ENCODE measurements at regions of chr1 and their contacts with region 1.

Region 1: GRCh38 chr1:203304919-203305808 is at the start of gene BTG2:
- DNase-seq: peak; percentile 99
- H3K4me3 ChIP-seq: peak within 1 kb of the TSS; percentile 84 to 94
- H3K27ac ChIP-seq: peak within 1 kb of the TSS; percentile 45 to 83; a peak in 3 of 4 replicates
- H3K4me1 ChIP-seq: peaks cover 22 to 53% of the 10 kb centered on the region in 2 experiments
- H3K27me3 ChIP-seq: no peaks in the 10 kb centered on the region
- CTCF ChIP-seq: no peak
- EP300 ChIP-seq: no peak
- RAD21 ChIP-seq: no peak
- polyA plus RNA-seq, gene BTG2: 26.2 and 33.5 TPM in 2 replicates

Region 2: DNA sequence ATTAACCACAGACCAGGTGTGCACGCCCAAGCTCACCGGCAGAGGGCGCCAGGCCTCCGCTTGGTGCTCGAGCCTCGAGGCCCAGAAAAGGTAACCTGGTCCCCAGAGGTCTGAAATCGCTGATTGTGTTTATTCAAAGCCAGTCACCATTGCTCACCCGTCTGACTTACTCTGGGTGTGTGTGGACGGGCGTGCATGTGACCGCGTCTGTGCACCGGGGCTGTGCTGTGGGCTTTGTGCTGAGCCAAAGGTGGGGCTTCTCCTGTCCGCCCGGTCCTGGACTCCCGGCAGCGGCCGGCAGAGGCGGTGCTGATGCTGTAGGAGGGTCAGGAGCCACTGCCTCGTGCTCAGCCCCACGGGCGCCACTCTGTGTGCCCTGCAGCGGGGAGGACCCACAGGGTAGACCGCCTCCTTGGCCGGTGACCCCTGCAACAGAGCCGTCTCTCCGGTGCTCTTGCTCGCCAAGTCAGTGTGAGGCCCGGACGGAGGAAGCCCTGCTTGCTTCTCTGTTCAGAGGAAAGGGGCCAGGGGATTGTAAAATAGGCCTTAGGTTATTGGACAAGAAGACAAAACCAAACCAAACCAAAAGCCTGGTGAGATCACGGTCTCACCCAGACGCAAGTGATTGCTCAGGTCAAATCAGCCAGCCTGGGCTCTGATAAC is 31.8 kb before region 1 on chr1:
- CTCF ChIA-PET with region 1: interaction called, 127 read pairs
- POLR2A ChIA-PET with region 1: interaction called, 6 read pairs
- DNase-seq: peak; percentile 86
- H3K4me3 ChIP-seq: peak overlapping the region in 1 of 2 experiments; percentile 31; a peak in 1 of 4 replicates
- H3K27ac ChIP-seq: no peak overlapping the region
- H3K4me1 ChIP-seq: peaks cover 0 to 28% of the 10 kb centered on the region in 2 experiments; a peak in 1 of 4 replicates
- H3K27me3 ChIP-seq: no peaks in the 10 kb centered on the region
- CTCF ChIP-seq: peak; percentile 98
- EP300 ChIP-seq: no peak
- RAD21 ChIP-seq: peak; percentile 93

Region 3: GRCh38 chr1:203290261-203291089 is 14.7 kb before region 1 on chr1:
- CTCF ChIA-PET with region 1: interaction called, 4 read pairs
- POLR2A ChIA-PET with region 1: interaction called, 12 read pairs
- DNase-seq: peak; percentile 91
- H3K4me3 ChIP-seq: peak overlapping the region in 1 of 2 experiments; percentile 7; a peak in 1 of 4 replicates
- H3K27ac ChIP-seq: peak overlapping the region in 1 of 2 experiments; percentile 76; a peak in 2 of 4 replicates
- H3K4me1 ChIP-seq: peaks cover 0 to 32% of the 10 kb centered on the region in 2 experiments; a peak in 1 of 4 replicates
- H3K27me3 ChIP-seq: peaks cover 10% of the 10 kb centered on the region
- CTCF ChIP-seq: no peak
- EP300 ChIP-seq: no peak
- RAD21 ChIP-seq: no peak

Region 4: DNA sequence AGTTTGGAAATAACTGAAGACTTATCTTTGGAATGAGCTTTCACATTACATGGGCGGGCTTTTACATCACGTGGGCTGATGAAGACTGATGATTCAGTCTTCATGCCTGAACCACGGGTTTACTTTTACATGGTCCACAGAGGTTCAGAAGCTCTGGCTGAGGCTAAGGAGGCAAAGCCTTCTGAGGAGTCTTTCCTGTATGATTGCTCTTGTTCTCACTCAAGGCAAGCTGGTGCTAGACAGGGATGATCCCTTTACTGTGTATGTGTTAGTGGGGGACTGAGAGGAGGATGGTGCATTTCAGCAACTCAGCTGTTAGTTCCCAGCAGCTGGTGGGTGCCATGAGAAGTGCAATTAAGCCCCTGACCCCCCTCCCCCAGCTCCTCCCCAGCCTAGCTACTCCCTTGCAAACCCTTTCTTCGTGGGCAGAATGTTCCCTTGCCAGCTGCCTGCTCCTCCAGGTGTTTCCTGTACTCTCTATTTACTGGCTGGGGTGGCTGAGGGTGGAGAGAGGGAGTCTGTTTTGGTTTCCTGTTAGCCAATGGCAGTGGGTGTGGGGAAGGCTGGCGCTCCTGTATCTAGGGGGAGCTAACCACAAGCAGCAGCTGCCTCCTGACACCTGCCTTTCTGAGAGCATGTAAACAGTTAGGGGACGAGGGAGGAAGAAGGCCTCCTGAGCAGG is 15.6 kb after region 1 on chr1:
- CTCF ChIA-PET with region 1: interaction called, 73 read pairs
- POLR2A ChIA-PET with region 1: interaction called, 18 read pairs
- DNase-seq: no peak
- H3K4me3 ChIP-seq: no peak overlapping the region
- H3K27ac ChIP-seq: no peak overlapping the region
- H3K4me1 ChIP-seq: peaks cover 3 to 39% of the 10 kb centered on the region in 2 experiments; a peak in 1 of 4 replicates
- H3K27me3 ChIP-seq: peaks cover 26% of the 10 kb centered on the region
- CTCF ChIP-seq: no peak
- EP300 ChIP-seq: no peak
- RAD21 ChIP-seq: no peak

Region 5: DNA sequence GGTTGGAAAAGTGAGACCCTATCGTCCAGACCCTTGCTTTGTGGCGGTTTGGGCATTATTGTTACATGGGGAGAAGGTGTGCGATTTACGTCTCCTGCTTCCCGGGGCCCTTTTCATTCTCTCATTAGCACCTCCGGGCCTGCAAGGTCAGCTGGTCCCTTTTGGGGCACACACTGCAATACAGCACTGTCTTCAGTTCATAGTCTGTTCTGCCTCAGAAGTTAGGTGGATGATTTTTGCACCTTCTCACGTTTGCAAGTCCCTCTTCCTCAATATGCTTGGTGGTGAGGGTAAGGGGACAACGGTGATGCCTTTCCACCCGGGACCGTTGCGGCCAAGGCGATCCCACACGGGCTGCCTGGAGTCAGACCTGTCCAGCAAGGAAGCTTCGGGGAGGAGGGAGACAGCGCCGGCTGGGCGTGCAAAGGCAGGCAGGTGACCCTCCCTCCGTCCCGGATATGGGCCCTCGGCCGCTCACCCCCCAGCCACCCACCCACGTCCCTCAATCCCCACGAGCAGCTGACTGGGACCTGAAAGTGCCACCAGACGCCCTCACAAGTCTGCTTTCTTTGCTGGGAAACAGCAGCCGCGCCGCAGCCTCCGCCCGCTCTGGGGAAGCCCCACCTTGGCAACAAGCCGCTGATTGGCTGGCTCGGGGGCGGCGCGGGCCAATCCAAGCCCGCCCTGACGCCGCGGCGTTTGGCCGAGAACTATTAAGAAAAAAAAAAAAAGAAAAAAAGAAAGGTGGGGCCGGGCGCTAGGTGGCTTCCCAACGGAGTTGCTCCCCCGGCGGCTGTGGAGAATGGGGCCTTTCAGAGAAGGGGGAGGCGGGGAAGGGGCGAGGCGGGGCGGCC is 21.9 kb after region 1 on chr1:
- CTCF ChIA-PET with region 1: interaction called, 73 read pairs
- POLR2A ChIA-PET with region 1: interaction called, 18 read pairs
- DNase-seq: peak; percentile 97
- H3K4me3 ChIP-seq: peak overlapping the region; percentile 51 to 71
- H3K27ac ChIP-seq: peak overlapping the region in 1 of 2 experiments; percentile 96; a peak in 2 of 4 replicates
- H3K4me1 ChIP-seq: peaks cover 5 to 43% of the 10 kb centered on the region in 2 experiments; a peak in 2 of 4 replicates
- H3K27me3 ChIP-seq: peaks cover 26% of the 10 kb centered on the region
- CTCF ChIP-seq: no peak
- EP300 ChIP-seq: peak; percentile 29 to 92; a peak in 3 of 4 replicates
- RAD21 ChIP-seq: no peak

Region 6: DNA sequence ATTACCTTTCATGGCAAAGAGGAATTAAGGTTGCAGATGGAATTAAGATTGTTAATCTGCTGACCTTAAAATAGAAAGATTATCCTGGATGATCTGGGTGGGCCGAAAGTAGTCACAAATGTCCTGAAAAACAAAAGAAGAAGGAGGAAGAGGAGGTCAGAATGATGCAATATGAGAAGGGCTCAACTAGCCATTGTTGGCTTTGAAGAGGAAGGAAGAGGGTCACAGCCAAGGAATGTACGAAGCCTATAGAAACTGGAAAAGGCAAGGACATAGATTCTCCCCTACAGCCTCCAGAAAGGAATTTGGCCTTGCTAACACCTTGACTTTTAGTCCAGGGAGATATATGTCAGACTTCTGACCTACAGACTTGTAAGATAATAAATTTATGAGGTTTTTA is 85.1 kb after region 1 on chr1:
- CTCF ChIA-PET with region 1: no interaction called
- POLR2A ChIA-PET with region 1: no interaction called
- DNase-seq: no peak
- H3K4me3 ChIP-seq: no peak overlapping the region
- H3K27ac ChIP-seq: no peak overlapping the region
- H3K4me1 ChIP-seq: no peaks in the 10 kb centered on the region
- H3K27me3 ChIP-seq: peaks cover 16% of the 10 kb centered on the region
- CTCF ChIP-seq: no peak
- EP300 ChIP-seq: no peak
- RAD21 ChIP-seq: no peak